Heart right ventricle (tissue), 16 donors: ENCODE measurements at regions of chr16 and their contacts with region 1.

Region 1: DNA sequence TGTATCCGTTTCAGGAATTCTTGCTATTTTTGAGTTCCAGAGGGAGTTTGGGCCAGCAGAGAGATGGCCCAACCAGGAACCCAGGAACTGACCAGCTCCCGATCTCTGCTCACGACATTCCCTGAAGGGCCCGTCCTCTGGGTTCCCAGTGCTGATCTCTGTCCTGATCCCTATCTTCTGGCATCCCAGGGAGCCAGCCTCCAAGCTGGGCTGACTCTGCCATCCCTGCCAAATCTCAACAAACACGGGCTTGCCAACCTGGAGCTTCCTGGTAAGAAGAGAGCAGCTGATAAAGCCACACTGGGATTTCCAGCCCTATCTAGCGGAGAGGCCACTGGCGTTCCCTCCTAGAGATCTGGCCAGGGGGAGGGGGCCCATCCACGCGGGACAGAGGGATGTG is 16.2 kb downstream of the GPRC5B start:
- DNase-seq: no peak
- ATAC-seq: peak in 2 of 8 donors; percentile 13 to 27
- H3K4me3 ChIP-seq: no peak overlapping the region
- H3K27ac ChIP-seq: peak overlapping the region in 6 of 10 donors; percentile 17 to 52 (median 24)
- H3K4me1 ChIP-seq: peaks cover 2 to 76% (median 45%) of the 10 kb centered on the region in 9 donors
- H3K27me3 ChIP-seq: no peaks in the 10 kb centered on the region
- CTCF ChIP-seq: no peak

Region 2: DNA sequence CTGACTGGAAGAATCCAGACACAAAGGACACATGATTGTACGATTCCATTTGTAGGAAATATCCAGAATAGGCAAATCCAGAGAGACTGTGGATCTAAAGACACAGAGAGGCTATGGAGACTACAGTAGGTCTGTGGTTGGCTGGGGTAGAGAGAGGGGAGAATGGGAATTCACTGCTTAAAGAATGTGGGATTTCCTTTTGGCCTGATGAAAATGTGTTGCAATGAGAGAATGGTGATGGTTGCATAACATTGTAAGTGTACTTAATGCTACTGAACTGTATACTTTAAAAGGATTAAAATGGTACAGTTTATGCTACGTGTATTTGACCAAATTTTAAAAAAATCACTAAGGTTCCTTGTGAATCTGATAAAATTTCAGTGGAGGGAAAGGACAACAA is 45.9 kb before region 1 on chr16:
- intact Hi-C with region 1: loop called in 1 of 10 experiments (anchors 5 kb)
- DNase-seq: no peak
- ATAC-seq: no peak
- H3K4me3 ChIP-seq: no peak overlapping the region
- H3K27ac ChIP-seq: no peak overlapping the region
- H3K4me1 ChIP-seq: no peaks in the 10 kb centered on the region
- H3K27me3 ChIP-seq: no peaks in the 10 kb centered on the region
- CTCF ChIP-seq: no peak

Region 3: GRCh38 chr16:19907161-19907992 is 39.0 kb after region 1 on chr16:
- intact Hi-C with region 1: no loop called
- DNase-seq: peak; percentile 47 to 62
- ATAC-seq: peak; percentile 83 to 91 (median 89)
- H3K4me3 ChIP-seq: peak overlapping the region in 1 of 10 donors; percentile 15
- H3K27ac ChIP-seq: no peak overlapping the region
- H3K4me1 ChIP-seq: peaks cover 0 to 7% (median 5%) of the 10 kb centered on the region in 9 donors
- H3K27me3 ChIP-seq: peaks cover 0 to 36% (median 17%) of the 10 kb centered on the region in 7 donors
- CTCF ChIP-seq: peak; percentile 88 to 98 (median 95)

Region 4: DNA sequence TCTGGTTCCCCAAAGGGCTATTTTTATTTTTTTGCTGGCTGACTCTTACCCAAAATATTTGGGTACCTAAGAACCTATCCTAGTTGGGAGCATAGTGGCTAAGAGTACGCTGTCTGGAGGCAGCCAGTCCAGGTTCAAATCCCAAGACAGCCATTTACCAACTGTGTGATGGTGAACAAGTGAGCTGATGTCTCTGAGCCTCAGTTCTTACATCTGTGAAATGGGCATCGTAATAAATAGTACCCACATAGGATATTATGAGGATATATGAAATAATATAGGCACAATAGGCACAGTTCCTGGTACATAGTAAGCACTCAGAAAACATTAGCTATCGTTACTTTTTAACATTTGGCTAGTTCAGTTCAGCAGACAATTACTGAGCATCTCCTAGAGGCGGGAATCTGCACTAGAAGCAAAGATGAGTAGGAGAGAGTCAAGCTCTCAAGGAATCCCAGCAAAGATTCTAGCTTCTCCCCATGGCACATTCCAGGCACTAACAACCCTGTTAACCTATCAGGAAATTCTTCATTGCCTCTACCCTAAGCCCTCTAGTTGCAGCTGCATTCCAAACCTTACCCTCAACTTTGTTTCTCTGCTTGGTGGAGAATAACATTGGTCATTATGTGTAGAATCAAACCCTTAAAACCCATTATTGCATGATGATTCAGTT is 173.6 kb after region 1 on chr16:
- intact Hi-C with region 1: no loop called
- DNase-seq: no peak
- ATAC-seq: no peak
- H3K4me3 ChIP-seq: no peak overlapping the region
- H3K27ac ChIP-seq: no peak overlapping the region
- H3K4me1 ChIP-seq: no peaks in the 10 kb centered on the region
- H3K27me3 ChIP-seq: peaks cover 0 to 27% (median 10%) of the 10 kb centered on the region in 7 donors
- CTCF ChIP-seq: no peak